GM12878 (cell line): ENCODE measurements at regions of chr17 and their contacts with region 1.

Region 1: DNA sequence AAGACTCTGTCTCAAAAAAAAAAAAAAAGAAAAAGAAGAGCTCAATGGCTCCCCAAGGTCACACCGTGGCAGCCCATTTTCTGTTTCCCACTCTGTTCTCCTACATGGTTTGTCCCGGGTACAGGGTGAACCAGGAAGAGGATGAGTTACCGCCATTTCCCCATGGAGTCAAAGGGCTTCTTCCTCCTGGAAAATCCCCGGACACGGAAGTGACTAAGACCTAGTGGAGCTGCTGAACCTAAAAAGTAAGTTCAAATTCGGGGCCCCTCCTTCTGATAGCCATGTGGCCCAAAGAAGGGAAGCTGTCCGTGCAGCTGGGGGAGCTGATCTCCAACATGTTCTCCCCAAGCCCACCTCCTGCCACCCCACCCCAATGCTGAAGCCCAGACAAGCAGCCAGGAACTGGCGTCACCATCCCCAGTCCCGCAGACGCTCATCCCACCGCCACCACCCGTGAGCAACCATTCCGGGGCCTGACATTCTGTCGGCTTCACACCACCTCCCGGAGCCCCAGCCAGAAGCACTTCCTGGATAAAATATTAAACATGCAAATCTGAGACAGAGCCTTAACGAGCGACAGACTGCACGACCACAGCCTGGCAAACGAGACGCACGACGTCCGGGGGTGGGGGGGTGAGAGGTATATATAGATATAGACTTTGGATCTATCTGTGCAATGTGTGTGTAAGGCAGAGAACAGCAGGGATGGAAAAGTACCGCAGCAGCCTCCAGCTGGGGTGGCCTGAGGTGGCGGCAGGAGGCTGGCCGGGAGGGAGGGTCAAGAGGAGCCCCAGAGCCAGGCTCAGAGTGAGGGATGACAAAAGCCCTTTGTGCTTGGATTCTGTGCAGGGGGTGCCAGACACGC is 17.6 kb downstream of the EPOP start:
- DNase-seq: no peak
- ATAC-seq: no peak
- H3K4me3 ChIP-seq: no peak overlapping the region
- H3K27ac ChIP-seq: no peak overlapping the region
- H3K4me1 ChIP-seq: peaks cover 55% of the 10 kb centered on the region
- H3K27me3 ChIP-seq: no peaks in the 10 kb centered on the region
- CTCF ChIP-seq: no peak
- EP300 ChIP-seq: no peak
- POLR2A ChIP-seq: peak; percentile 43; the same call in 1 of the 2 replicates
- RAD21 ChIP-seq: no peak

Region 2: GRCh38 chr17:38605888-38606645 is 51.1 kb before region 1 on chr17 and contains the start of gene SRCIN1:
- CTCF ChIA-PET with region 1: interaction called, 33 read pairs
- POLR2A ChIA-PET with region 1: interaction called, 3 read pairs
- RAD21 ChIA-PET with region 1: interaction called, 61 read pairs
- SMC1A ChIA-PET with region 1: interaction called, 7 read pairs
- in situ Hi-C with region 1: no loop called
- intact Hi-C with region 1: loop called (anchors 2 kb)
- DNase-seq: no peak
- ATAC-seq: peak; percentile 58
- H3K4me3 ChIP-seq: peak within 1 kb of the TSS; percentile 82
- H3K27ac ChIP-seq: no peak within 1 kb of the TSS
- H3K4me1 ChIP-seq: peaks cover 11% of the 10 kb centered on the region
- H3K27me3 ChIP-seq: peaks cover 0 to 14% of the 10 kb centered on the region in 2 experiments; a peak in 2 of 4 replicates
- CTCF ChIP-seq: peak; percentile 97 to 99 (median 98)
- EP300 ChIP-seq: no peak
- POLR2A ChIP-seq: peak; percentile 39; the same call in 1 of the 2 replicates
- RAD21 ChIP-seq: peak; percentile 47
- polyA plus RNA-seq, gene SRCIN1: not detected

Region 3: GRCh38 chr17:38625482-38625881 is 31.7 kb before region 1 on chr17:
- CTCF ChIA-PET with region 1: interaction called, 5 read pairs
- POLR2A ChIA-PET with region 1: interaction called, 19 read pairs
- RAD21 ChIA-PET with region 1: interaction called, 17 read pairs
- SMC1A ChIA-PET with region 1: interaction called, 29 read pairs
- in situ Hi-C with region 1: no loop called
- intact Hi-C with region 1: no loop called
- DNase-seq: no peak
- ATAC-seq: no peak
- H3K4me3 ChIP-seq: peak overlapping the region; percentile 48; the same call in 1 of the 2 replicates
- H3K27ac ChIP-seq: peak overlapping the region; percentile 18; the same call in 1 of the 2 replicates
- H3K4me1 ChIP-seq: peaks cover 4% of the 10 kb centered on the region
- H3K27me3 ChIP-seq: no peaks in the 10 kb centered on the region
- CTCF ChIP-seq: no peak
- EP300 ChIP-seq: no peak
- POLR2A ChIP-seq: no peak
- RAD21 ChIP-seq: no peak